ENCODE measurements at regions of chr15 and their contacts with region 1.

Region 1: GRCh38 chr15:98668566-98669308 is 20.4 kb downstream of the IGF1R start:
- DNase-seq: no peak
- ATAC-seq: peak in 1 of 4 donors; percentile 34
- H3K4me3 ChIP-seq: peak overlapping the region in 1 of 12 donors; percentile 1
- H3K27ac ChIP-seq: peak overlapping the region in 11 of 12 donors; percentile 34 to 90 (median 62)
- H3K4me1 ChIP-seq: peaks cover 0 to 92% (median 55%) of the 10 kb centered on the region in 12 donors
- H3K27me3 ChIP-seq: no peaks in the 10 kb centered on the region
- CTCF ChIP-seq: no peak
- POLR2A ChIP-seq: no peak

Region 2: DNA sequence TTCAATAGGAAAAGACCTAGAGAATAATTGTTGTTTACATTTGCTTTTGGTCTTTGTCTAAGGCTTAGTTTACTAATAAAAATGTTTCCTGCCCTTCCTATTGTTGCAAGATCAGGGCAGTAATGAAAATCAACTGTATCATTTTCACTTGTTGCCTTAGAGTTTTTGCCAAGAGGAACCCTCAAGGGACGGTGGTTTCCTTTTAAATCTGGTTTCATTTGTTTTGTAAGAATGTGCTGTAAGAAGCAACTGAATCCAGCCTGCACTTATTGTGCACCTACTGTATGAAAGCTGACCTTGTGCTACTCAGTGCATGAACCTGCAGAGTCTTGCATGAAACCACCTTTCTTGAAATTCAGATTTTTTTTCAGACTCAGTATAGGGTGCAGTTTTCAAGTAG is 15.1 kb before region 1 on chr15:
- intact Hi-C with region 1: loop called in 1 of 10 experiments (anchors 2 kb)
- DNase-seq: no peak
- ATAC-seq: no peak
- H3K4me3 ChIP-seq: no peak overlapping the region
- H3K27ac ChIP-seq: peak overlapping the region in 4 of 12 donors; percentile 2 to 96 (median 93)
- H3K4me1 ChIP-seq: peaks cover 0 to 65% (median 44%) of the 10 kb centered on the region in 12 donors
- H3K27me3 ChIP-seq: peaks cover 0 to 29% (median 0%) of the 10 kb centered on the region in 9 donors
- CTCF ChIP-seq: no peak
- POLR2A ChIP-seq: no peak

Region 3: GRCh38 chr15:98719137-98719740 is 50.5 kb after region 1 on chr15:
- intact Hi-C with region 1: loop called in 3 of 10 experiments (anchors 5 to 10 kb)
- DNase-seq: no peak
- ATAC-seq: no peak
- H3K4me3 ChIP-seq: no peak overlapping the region
- H3K27ac ChIP-seq: peak overlapping the region in 10 of 12 donors; percentile 61 to 81 (median 69)
- H3K4me1 ChIP-seq: peaks cover 0 to 99% (median 57%) of the 10 kb centered on the region in 12 donors
- H3K27me3 ChIP-seq: no peaks in the 10 kb centered on the region
- CTCF ChIP-seq: no peak
- POLR2A ChIP-seq: no peak

Region 4: DNA sequence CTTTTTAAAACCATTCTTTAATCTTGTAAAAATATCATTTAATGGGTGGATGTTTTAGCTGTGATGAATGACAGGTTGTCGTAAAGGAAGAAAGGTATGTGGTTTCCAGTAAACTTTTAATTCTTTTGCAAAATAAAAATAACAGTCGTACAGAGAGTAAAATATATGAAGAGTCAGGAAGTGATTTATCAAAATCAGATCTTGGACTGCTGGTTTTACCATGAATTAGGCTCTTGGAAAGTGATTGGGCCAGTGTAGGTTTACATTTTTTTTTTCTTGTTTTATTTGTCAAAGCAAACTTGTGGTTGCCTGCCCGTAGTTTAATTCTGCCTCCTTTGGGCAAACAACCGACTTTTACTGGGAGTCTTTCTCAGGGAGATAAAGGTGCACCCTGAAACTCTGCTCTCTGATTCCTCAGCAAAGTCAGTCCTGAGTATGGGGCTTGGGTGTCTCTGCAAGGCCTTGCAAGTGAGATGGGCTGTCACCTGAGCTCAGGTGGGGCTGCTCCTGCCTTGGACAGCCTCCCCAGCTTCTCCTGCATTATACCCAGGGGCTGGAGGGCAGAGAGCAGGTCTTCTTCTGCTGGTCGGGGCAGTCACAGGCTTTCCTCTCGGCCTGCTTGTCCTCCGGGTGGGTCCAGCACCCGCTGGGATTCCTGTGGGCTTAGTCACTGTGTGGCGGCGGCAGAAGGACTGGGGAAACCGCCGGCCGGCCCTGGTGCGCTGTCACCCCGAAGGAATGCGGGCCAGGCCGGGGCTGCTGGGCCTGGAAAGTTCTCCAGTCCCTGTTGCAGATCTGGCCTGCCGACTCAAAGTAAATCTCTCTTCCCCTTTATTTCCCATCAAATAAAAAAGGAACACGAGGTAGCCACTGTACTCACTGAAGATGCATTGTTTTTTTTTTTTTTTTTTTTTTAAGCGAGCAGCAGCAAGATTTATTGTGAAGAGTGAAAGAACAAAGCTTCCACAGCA is 58.7 kb after region 1 on chr15:
- intact Hi-C with region 1: loop called in 3 of 10 experiments (anchors 5 to 10 kb)
- DNase-seq: peak; percentile 87 to 95 (median 93)
- ATAC-seq: peak; percentile 87 to 95 (median 94)
- H3K4me3 ChIP-seq: peak overlapping the region in 3 of 12 donors; percentile 3 to 15 (median 14)
- H3K27ac ChIP-seq: peak overlapping the region; percentile 52 to 95 (median 90)
- H3K4me1 ChIP-seq: peaks cover 3 to 95% (median 73%) of the 10 kb centered on the region in 12 donors
- H3K27me3 ChIP-seq: no peaks in the 10 kb centered on the region
- CTCF ChIP-seq: no peak
- POLR2A ChIP-seq: no peak

Region 5: GRCh38 chr15:99068186-99068585 is 399.4 kb after region 1 on chr15:
- intact Hi-C with region 1: loop called in 1 of 10 experiments (anchors 10 kb)
- DNase-seq: peak in 1 of 5 donors; percentile 12
- ATAC-seq: no peak
- H3K4me3 ChIP-seq: no peak overlapping the region
- H3K27ac ChIP-seq: no peak overlapping the region
- H3K4me1 ChIP-seq: peaks cover 0 to 6% (median 0%) of the 10 kb centered on the region in 12 donors
- H3K27me3 ChIP-seq: no peaks in the 10 kb centered on the region
- CTCF ChIP-seq: no peak
- POLR2A ChIP-seq: no peak